Lower leg skin (tissue), 4 donors: ENCODE measurements at regions of chr2 and their contacts with region 1.

Region 1: DNA sequence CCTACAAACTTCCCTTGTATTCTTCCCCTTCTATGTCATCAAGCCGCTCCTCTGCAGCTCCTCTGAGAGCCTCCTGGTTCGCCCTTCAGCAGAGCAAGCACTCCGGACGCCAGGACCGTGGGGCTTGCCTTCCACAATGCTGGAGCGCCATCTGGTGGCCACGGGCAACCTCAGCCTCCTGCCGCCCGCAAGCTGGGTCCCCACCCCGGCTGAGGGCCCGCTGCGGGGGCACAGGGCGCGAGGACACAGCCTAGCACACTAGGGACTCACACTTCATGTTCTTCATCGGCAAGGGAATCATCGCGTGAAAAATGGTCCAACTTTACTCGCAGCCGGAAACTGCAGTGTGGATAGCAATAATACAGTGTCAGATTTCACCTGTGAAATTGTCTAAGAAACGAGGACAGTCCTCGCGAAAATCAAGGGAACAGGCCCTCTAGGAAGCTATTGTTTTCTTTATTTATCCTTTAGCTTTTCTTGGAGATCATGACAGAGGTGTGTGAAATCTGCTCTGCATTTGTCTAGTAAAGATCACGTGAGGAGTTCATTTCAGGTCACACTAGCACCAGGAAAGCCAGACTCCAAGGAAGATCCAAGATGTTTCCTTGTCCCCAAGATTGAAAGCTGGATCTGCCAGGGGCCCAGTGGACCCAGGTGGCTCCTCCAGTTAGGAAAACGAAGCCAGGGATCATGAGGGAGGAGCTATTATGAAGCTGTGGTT is 5.8 kb downstream of the PRLH start:
- DNase-seq: peak; percentile 85 to 97
- H3K4me3 ChIP-seq: no peak overlapping the region
- CTCF ChIP-seq: peak in 1 of 3 donors; percentile 97
- POLR2A ChIP-seq: no peak

Region 2: DNA sequence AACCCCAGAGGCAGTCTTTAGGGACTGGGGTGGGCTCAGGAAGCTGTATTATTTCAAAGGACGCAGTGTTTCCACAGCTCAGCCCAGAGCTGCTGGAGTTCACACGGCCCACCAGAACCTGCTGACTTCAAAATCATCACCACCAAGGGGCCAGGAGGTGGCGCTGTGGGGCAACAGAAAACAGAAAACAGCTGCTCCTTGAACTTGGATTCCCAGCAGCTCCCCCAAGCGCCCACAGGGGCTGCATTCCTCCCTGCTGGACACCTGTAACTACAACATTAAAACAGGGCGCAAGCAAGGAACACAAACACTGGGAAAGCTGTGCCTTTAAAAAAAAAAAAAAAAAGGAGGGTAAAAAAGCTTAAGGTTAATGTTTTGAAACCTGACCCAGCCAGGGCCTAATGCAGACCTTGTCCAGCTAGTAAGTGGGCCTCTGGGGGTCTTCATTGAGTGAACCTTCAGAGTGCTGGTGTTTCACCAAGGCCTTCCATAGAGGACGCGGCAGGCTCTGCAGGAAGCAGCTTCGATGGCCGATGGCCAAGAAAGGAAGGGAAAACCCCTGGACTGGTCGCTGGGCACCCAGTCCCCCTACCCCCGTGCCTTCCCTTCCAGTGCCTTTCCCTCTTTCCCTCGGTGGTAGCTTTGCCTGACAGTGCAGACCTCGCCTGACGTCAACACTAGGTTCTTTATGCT is 59.3 kb before region 1 on chr2:
- intact Hi-C with region 1: loop called (anchors 5 kb)
- DNase-seq: peak; percentile 84 to 96
- H3K4me3 ChIP-seq: no peak overlapping the region
- CTCF ChIP-seq: no peak
- POLR2A ChIP-seq: no peak